ENCODE measurements at regions of chr7 and their contacts with region 1.

Region 1: GRCh38 chr7:149125863-149126661 is at the start of gene ZNF425:
- DNase-seq: peak; percentile 94
- ATAC-seq: peak; percentile 83
- H3K4me3 ChIP-seq: peak within 1 kb of the TSS; percentile 100
- H3K27ac ChIP-seq: peak within 1 kb of the TSS; percentile 57
- H3K4me1 ChIP-seq: peaks cover 5% of the 10 kb centered on the region
- H3K27me3 ChIP-seq: no peaks in the 10 kb centered on the region
- CTCF ChIP-seq: peak; percentile 82
- total RNA-seq, gene ZNF425: 1.6 and 2.0 TPM in 2 replicates

Region 2: GRCh38 chr7:148828965-148829364 is 297.1 kb before region 1 on chr7:
- CTCF ChIA-PET with region 1: no interaction called
- POLR2A ChIA-PET with region 1: no interaction called
- intact Hi-C with region 1: no loop called
- DNase-seq: no peak
- ATAC-seq: no peak
- H3K4me3 ChIP-seq: no peak overlapping the region
- H3K27ac ChIP-seq: no peak overlapping the region
- H3K4me1 ChIP-seq: no peaks in the 10 kb centered on the region
- H3K27me3 ChIP-seq: no peaks in the 10 kb centered on the region
- CTCF ChIP-seq: no peak

Region 3: DNA sequence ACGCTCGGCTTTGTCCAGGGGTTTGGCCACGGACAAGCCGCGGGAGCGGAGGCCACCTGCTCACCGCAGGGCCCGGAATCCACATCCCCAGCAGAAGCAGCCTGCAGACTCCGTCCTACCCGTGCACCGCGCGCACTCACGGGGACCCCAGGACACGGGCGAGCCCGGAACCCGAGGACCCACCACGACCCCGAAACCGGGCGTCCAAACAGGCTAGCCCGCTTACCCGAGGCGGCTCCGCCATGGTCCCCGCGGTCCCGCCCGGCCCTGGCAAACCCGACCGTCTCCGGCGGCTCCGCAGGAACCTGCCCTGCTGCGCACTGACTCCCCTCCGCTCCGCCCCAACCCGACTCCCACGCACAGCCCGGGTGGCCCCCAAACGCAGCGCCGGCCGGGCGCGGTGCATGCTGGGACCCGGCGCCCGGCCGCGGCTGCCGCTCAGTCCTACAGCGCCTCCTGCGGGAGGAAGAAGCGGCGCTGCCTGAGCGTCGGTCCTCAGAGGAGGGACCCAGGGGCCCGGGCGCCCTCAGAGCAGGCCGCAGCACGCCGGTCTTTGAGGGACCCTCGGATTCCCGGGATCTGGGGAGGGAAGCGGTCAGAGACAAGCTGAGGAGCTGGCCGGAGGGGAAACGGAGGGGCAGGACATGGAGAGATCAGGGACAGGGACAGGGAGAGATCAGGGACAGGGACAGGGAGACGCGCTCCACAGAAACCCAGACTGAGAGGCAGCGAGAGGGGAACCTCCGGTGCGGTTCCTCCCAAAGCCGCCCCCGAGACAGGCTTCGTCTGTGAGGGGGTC is 35.5 kb before region 1 on chr7 and contains the start of gene ZNF786:
- CTCF ChIA-PET with region 1: no interaction called
- POLR2A ChIA-PET with region 1: interaction called, 4 read pairs
- intact Hi-C with region 1: loop called (anchors 2 kb)
- DNase-seq: peak; percentile 90
- ATAC-seq: peak; percentile 85
- H3K4me3 ChIP-seq: peak within 1 kb of the TSS; percentile 97
- H3K27ac ChIP-seq: peak within 1 kb of the TSS; percentile 69
- H3K4me1 ChIP-seq: no peaks in the 10 kb centered on the region
- H3K27me3 ChIP-seq: no peaks in the 10 kb centered on the region
- CTCF ChIP-seq: peak; percentile 80
- total RNA-seq, gene ZNF786: 4.2 and 6.3 TPM in 2 replicates

Region 4: DNA sequence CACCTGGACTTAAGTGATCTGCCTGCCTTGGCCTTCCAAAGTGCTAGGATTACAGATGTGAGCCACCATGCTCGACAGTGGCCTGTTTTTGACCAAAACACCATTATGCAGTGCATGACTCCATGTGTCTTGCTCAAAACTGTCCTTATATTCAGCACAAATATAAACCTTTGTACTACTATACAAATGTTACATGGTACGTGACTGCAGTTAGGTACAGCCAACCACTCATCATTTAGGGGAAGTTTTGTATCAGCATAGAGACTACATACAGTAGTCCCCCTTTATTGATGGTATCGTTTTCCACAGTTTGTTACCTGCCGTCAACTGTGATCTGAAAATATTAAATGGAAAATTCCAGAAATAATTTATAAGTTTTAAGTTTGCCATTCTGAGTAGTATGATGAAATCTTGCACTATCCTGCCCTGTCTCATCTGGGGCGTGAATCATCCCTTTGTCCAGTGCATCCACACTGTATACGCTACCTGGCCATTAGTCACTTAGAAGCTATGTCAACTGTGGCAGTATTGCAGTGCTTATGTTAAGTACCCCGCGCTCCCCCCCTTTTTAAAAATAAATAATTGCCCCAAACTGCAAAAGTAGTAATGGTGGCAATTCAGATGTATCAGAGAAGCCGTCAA is 46.0 kb after region 1 on chr7:
- CTCF ChIA-PET with region 1: no interaction called
- POLR2A ChIA-PET with region 1: no interaction called
- intact Hi-C with region 1: loop called (anchors 1 kb)
- DNase-seq: peak; percentile 87
- ATAC-seq: peak; percentile 100
- H3K4me3 ChIP-seq: no peak overlapping the region
- H3K27ac ChIP-seq: peak overlapping the region; percentile 79
- H3K4me1 ChIP-seq: peaks cover 13% of the 10 kb centered on the region
- H3K27me3 ChIP-seq: no peaks in the 10 kb centered on the region
- CTCF ChIP-seq: no peak

Region 5: GRCh38 chr7:149188637-149189259 is 62.7 kb after region 1 on chr7:
- CTCF ChIA-PET with region 1: no interaction called
- POLR2A ChIA-PET with region 1: no interaction called
- intact Hi-C with region 1: no loop called
- DNase-seq: no peak
- ATAC-seq: no peak; the same call in 1 of the 2 replicates
- H3K4me3 ChIP-seq: no peak overlapping the region
- H3K27ac ChIP-seq: no peak overlapping the region
- H3K4me1 ChIP-seq: no peaks in the 10 kb centered on the region
- H3K27me3 ChIP-seq: no peaks in the 10 kb centered on the region
- CTCF ChIP-seq: no peak

Measured in PC-3 (cell line).